HCT116 (cell line): ENCODE measurements at regions of chr17 and their contacts with region 1.

Region 1: DNA sequence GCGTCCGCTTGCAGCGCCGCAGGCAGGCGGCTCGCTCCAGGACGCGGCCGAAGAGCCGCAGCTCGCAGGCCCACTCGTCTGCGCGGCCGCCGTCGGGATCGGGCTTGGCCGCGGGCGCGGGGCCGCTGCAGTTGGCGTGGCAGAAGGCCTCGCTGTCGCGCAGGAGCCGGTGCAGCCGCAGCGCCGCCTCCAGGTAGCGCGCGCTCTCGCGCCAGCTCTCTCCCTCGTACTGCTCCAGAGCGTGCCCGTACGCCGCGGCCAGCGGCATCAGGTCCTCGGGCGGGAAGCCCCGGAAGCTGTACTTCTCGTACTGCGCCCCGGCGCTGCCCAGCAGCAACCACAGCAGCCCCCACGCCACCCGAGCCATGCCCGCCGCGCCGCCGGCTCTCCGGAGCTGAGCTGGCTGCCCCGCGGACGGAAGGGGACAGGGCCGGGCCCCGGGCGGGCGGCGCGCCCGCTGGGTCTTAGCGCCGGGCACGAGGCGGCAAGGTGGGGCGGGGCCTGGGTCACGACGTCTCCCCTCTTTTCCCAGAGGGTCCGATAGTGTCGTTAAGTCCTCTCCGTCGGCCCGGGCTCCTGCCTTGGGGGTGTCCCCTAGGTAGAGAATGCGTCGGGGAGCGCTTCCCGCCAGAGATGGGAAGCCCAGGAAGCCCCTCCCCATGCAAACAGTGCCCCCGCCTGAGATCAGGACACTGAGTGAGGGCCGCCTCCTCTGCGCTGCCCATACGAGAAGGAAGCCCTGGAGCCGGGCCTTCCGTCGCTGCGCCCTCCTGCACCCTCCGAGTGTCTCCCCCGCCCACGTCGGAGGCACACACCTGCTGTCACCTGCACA is at the start of gene P3H4:
- DNase-seq: peak; percentile 44
- ATAC-seq: peak; percentile 81
- H3K4me3 ChIP-seq: peak within 1 kb of the TSS; percentile 66 to 72
- H3K27ac ChIP-seq: peak within 1 kb of the TSS; percentile 97
- H3K4me1 ChIP-seq: peaks cover 10 to 41% of the 10 kb centered on the region in 2 experiments; a peak in 3 of 4 replicates
- H3K27me3 ChIP-seq: no peaks in the 10 kb centered on the region
- CTCF ChIP-seq: peak in 2 of 3 experiments; percentile 51 to 64; a peak in 4 of 6 replicates
- POLR2A ChIP-seq: peak; percentile 39
- RAD21 ChIP-seq: no peak; the same call in 1 of the 2 replicates
- total RNA-seq, gene P3H4: 23.4 TPM

Region 2: DNA sequence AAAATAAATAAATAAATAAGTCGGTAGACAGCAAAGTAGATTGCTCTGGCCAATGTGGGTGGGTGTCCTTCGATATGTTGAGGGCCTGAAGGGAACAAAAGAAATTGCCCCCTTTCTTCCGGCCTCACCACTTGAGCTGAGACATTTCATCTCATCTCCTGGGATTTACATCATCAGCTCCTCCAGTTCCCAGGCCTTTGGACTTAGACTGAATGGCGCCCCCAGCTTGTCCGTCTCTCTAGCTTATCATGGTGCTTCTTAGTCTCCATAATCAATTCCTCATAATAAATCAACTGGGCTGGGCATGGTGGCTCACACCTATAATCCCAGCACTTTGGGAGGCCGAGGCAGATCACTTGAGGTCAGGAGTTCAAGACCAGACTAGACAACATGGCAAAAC is 63.5 kb before region 1 on chr17:
- CTCF ChIA-PET with region 1: no interaction called
- POLR2A ChIA-PET with region 1: no interaction called
- RAD21 ChIA-PET with region 1: no interaction called
- intact Hi-C with region 1: no loop called
- DNase-seq: no peak
- ATAC-seq: no peak
- H3K4me3 ChIP-seq: no peak overlapping the region
- H3K27ac ChIP-seq: no peak overlapping the region
- H3K4me1 ChIP-seq: no peaks in the 10 kb centered on the region
- H3K27me3 ChIP-seq: no peaks in the 10 kb centered on the region
- CTCF ChIP-seq: no peak
- POLR2A ChIP-seq: no peak
- RAD21 ChIP-seq: no peak

Region 3: GRCh38 chr17:41786227-41787020 is 25.3 kb before region 1 on chr17 and contains the start of gene JUP:
- CTCF ChIA-PET with region 1: interaction called, 9 read pairs
- POLR2A ChIA-PET with region 1: interaction called, 11 read pairs
- RAD21 ChIA-PET with region 1: no interaction called
- intact Hi-C with region 1: no loop called
- DNase-seq: peak; percentile 99
- ATAC-seq: peak; percentile 94
- H3K4me3 ChIP-seq: peak within 1 kb of the TSS; percentile 78 to 80
- H3K27ac ChIP-seq: peak within 1 kb of the TSS; percentile 95
- H3K4me1 ChIP-seq: peaks cover 35 to 60% of the 10 kb centered on the region in 2 experiments
- H3K27me3 ChIP-seq: no peaks in the 10 kb centered on the region
- CTCF ChIP-seq: peak in 2 of 3 experiments; percentile 71 to 75; a peak in 5 of 6 replicates
- POLR2A ChIP-seq: peak; percentile 45
- RAD21 ChIP-seq: peak; percentile 46; the same call in 1 of the 2 replicates
- total RNA-seq, gene JUP: 224 TPM

Region 4: DNA sequence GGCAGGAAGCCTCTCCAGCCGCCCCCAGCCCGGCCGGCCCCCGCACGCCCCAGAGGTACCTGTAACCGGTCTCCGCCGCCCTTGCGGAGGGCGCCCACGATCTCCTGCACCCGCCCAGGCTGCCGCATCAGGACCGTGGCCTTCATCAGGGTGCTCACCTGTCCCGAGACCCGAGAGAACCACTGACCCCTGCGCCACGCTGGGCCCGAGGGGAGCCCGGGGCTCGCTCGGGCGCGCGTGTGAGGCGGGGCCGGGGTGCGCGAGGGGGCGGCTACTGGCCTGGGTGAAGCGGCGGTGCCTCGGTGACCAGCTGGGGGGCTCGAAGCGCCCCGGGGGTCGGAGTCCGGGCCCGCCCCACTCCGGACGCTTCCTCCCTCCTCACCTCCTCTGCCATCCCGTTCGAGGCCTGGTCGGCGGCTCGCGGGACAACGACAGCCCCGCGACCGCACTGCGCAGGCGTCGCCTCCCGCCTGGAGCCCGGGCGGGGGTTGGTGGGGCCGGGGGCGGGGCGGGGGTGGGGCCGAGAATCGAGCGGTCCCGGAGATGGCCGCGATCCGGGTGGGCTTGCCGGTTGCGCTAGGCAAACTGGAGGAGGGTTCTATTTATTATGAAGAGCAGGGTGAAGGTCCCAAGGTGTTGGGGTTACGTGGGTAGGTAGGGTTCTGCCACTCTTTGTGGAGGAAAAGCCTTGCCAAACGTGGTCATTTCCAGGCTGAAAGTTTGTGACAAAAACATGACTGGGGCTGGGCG is 24.2 kb after region 1 on chr17 and contains the start of gene NT5C3B:
- CTCF ChIA-PET with region 1: no interaction called
- POLR2A ChIA-PET with region 1: no interaction called
- RAD21 ChIA-PET with region 1: no interaction called
- intact Hi-C with region 1: no loop called
- DNase-seq: peak; percentile 7
- ATAC-seq: peak; percentile 89
- H3K4me3 ChIP-seq: peak within 1 kb of the TSS; percentile 78 to 86
- H3K27ac ChIP-seq: peak within 1 kb of the TSS; percentile 74; the same call in 1 of the 2 replicates
- H3K4me1 ChIP-seq: peaks cover 4 to 15% of the 10 kb centered on the region in 2 experiments; a peak in 3 of 4 replicates
- H3K27me3 ChIP-seq: no peaks in the 10 kb centered on the region
- CTCF ChIP-seq: no peak
- POLR2A ChIP-seq: peak; percentile 68
- RAD21 ChIP-seq: no peak
- total RNA-seq, gene NT5C3B: 110 TPM